ENCODE measurements at regions of chr18 and their contacts with region 1.

Region 1: GRCh38 chr18:55234366-55235093 is 275.3 kb upstream of the CCDC68 start:
- H3K4me3 Mint-ChIP-seq: no peak overlapping the region
- H3K27ac Mint-ChIP-seq: peak overlapping the region; percentile 17
- H3K4me1 Mint-ChIP-seq: peaks cover 21% of the 10 kb centered on the region
- H3K27me3 Mint-ChIP-seq: no peaks in the 10 kb centered on the region

Region 2: GRCh38 chr18:55275039-55275901 is 40.7 kb after region 1 on chr18:
- intact Hi-C with region 1: loop called (anchors 2 kb)
- H3K4me3 Mint-ChIP-seq: no peak overlapping the region
- H3K27ac Mint-ChIP-seq: no peak overlapping the region
- H3K4me1 Mint-ChIP-seq: peaks cover 13% of the 10 kb centered on the region
- H3K27me3 Mint-ChIP-seq: no peaks in the 10 kb centered on the region

Region 3: DNA sequence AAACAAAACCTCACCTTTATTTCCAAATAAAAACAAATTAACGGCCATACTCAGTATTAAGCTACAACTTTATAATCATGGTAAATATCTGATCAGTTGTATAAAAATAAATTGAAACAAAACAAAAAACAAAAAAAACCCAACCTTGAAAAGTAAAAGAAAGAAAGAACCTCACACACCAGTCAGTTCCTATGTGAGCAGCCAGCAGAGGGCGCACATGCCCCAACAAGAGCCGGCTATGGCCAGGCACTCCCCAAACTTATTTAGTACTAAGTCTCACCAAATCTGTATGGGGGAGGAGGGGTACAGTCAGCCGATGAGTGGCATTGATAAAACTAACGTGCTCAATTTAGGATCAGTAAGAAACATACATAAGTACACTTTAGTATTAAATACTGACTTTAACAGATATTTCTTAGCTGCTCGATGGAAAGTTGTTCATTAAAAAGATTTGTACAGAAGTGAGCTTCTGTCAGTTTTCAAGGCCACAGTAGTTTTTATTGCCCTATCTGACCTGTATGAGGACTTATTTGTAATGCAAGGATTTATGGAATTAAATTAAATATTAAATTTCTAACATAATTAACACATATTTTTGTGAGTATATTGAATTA is 180.8 kb after region 1 on chr18:
- intact Hi-C with region 1: loop called (anchors 5 kb)
- H3K4me3 Mint-ChIP-seq: no peak overlapping the region
- H3K27ac Mint-ChIP-seq: no peak overlapping the region
- H3K4me1 Mint-ChIP-seq: peaks cover 13% of the 10 kb centered on the region
- H3K27me3 Mint-ChIP-seq: no peaks in the 10 kb centered on the region

Region 4: DNA sequence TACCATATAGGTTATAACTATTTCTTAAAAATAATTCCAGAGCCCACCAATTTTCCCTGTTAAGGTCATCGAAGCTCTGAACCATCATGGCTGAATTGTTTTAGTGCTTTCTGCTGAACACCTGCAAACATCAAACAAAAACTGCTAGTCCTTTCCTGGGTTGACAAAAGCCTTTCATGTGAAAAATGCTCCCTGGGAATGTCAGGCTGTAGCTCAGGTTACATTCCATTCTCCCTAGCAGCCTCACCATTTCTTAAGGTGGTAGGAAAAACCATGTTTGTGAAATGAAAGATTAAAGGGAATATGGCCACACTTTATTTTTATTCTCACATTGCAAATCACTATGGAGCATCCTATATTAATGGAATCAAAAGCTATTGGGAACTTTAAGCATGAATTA is 347.8 kb after region 1 on chr18:
- intact Hi-C with region 1: loop called (anchors 5 kb)
- H3K4me3 Mint-ChIP-seq: no peak overlapping the region
- H3K27ac Mint-ChIP-seq: no peak overlapping the region
- H3K4me1 Mint-ChIP-seq: peaks cover 19% of the 10 kb centered on the region
- H3K27me3 Mint-ChIP-seq: no peaks in the 10 kb centered on the region

Region 5: DNA sequence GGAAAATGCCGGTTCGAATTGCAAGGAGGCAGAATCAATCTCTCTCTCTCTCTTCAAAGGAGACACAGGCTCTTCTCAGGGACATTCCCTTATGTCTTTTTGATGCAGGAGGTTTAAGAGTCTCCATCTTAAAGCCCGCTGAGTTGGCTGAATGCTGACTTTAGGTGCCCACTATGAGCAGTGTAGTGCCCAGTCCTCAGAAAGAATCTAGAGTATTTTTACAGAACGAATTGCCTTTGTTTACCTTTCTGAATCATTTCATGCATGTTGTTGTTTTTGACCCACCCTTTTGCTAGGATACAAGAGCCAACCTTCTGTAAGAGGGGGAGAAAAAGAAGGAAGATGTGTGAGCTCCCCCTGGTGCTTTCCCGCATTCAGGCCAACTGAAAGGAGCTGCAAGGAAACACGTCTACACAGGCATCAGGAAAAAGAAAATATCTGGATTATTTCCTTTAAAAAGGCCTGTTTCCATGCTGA is 547.0 kb after region 1 on chr18:
- intact Hi-C with region 1: loop called (anchors 5 kb)
- H3K4me3 Mint-ChIP-seq: no peak overlapping the region
- H3K27ac Mint-ChIP-seq: no peak overlapping the region
- H3K4me1 Mint-ChIP-seq: peaks cover 19% of the 10 kb centered on the region
- H3K27me3 Mint-ChIP-seq: peaks cover 24% of the 10 kb centered on the region